PC-3 (cell line): ENCODE measurements at regions of chr9 and their contacts with region 1.

Region 1: DNA sequence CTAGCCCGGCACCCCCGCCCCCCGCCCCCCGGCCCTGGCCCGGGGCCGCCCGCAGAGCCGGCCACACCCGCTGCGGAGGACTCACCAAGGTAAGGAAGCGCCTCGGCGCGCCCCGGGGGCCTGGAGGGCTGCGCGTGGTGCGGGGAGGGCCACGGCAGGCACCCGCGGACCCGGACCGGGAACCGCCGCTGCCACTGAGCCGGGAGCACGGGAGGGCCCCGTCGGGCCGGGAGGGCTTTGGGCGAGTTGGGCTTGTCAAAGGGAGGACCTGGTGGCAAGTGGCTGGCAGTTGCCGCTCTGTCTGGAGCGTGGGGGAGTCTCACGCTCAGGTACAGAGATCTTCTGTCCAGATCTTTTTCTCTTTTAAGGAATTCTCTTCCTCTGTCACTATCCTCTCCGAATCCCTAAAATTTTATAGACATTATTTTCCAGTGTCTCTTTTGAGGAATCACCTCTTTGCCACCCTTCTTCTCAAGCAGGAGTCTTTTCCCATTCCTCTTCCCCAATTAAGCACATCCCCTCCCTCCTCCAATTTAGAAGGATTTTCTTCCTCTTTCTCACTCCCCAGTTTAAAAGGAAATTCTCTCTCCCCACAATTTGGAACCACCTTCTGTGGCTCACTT is 11.3 kb upstream of the LHX2 start:
- DNase-seq: no peak
- ATAC-seq: peak; percentile 40
- H3K4me3 ChIP-seq: no peak overlapping the region
- H3K27ac ChIP-seq: no peak overlapping the region
- H3K4me1 ChIP-seq: no peaks in the 10 kb centered on the region
- H3K27me3 ChIP-seq: peaks cover 92% of the 10 kb centered on the region
- CTCF ChIP-seq: no peak

Region 2: DNA sequence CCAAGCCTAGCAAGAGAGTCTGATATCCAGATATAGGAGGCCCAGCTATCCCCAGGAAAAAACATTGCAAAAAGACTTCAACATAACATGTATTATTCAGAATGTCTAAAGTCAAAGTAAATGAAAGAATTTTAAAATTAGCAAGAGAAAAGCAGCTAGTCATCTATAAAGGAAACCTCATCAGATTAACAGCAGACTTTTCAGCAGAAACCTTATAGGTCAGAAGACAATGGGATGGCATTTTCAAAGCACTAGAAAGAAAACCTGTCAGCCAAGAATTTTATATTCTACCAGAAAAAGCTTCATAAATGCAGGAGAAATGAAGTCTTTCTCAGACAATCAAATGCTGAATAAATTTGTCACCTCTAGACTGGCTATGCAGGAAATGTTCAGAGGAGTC is 1315.4 kb before region 1 on chr9:
- CTCF ChIA-PET with region 1: no interaction called
- POLR2A ChIA-PET with region 1: no interaction called
- intact Hi-C with region 1: no loop called
- DNase-seq: no peak
- ATAC-seq: no peak
- H3K4me3 ChIP-seq: no peak overlapping the region
- H3K27ac ChIP-seq: no peak overlapping the region
- H3K4me1 ChIP-seq: no peaks in the 10 kb centered on the region
- H3K27me3 ChIP-seq: 0 out of 2 replicates have a peak, but pooled peaks cover 3% of the 10 kb centered on the region
- CTCF ChIP-seq: no peak

Region 3: GRCh38 chr9:123724211-123724796 is 276.0 kb before region 1 on chr9:
- CTCF ChIA-PET with region 1: interaction called, 10 read pairs
- POLR2A ChIA-PET with region 1: no interaction called
- intact Hi-C with region 1: no loop called
- DNase-seq: no peak
- ATAC-seq: no peak
- H3K4me3 ChIP-seq: no peak overlapping the region
- H3K27ac ChIP-seq: no peak overlapping the region
- H3K4me1 ChIP-seq: no peaks in the 10 kb centered on the region
- H3K27me3 ChIP-seq: no peaks in the 10 kb centered on the region
- CTCF ChIP-seq: no peak; the same call in 1 of the 2 replicates

Region 4: GRCh38 chr9:124428751-124429529 is 428.7 kb after region 1 on chr9:
- CTCF ChIA-PET with region 1: no interaction called
- POLR2A ChIA-PET with region 1: no interaction called
- intact Hi-C with region 1: no loop called
- DNase-seq: no peak
- ATAC-seq: no peak
- H3K4me3 ChIP-seq: no peak overlapping the region
- H3K27ac ChIP-seq: no peak overlapping the region
- H3K4me1 ChIP-seq: no peaks in the 10 kb centered on the region
- H3K27me3 ChIP-seq: no peaks in the 10 kb centered on the region
- CTCF ChIP-seq: no peak